AG04449 (cell line): ENCODE measurements at regions of chr4 and their contacts with region 1.

Region 1: GRCh38 chr4:52659001-52659721 is at the start of gene USP46:
- DNase-seq: no peak
- H3K4me3 ChIP-seq: peak within 1 kb of the TSS; percentile 76
- CTCF ChIP-seq: no peak

Region 2: DNA sequence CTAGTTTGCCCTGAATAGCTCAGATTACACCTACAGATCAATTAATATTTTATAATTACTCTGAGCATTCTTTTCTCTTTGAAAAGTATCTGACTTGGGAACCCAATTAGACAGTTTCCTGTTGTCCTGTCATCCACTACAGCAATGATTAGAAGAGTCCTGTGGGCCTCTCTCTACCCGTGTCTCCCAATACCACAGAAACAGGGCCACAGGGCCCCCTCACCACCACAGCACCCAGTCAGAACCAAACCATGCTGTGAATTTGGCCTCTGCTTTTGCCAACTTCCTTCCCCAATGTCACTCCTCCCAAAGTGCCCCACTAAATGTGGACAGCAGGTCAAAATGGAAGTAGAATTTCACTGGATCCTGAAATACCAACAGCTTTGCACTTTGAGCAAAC is 10.3 kb before region 1 on chr4:
- CTCF ChIA-PET with region 1: interaction called, 15 read pairs
- POLR2A ChIA-PET with region 1: interaction called, 7 read pairs
- DNase-seq: no peak
- H3K4me3 ChIP-seq: no peak overlapping the region
- CTCF ChIP-seq: no peak

Region 3: GRCh38 chr4:52701207-52701606 is 42.0 kb after region 1 on chr4:
- CTCF ChIA-PET with region 1: no interaction called
- POLR2A ChIA-PET with region 1: no interaction called
- DNase-seq: no peak
- H3K4me3 ChIP-seq: no peak overlapping the region
- CTCF ChIP-seq: no peak

Region 4: GRCh38 chr4:52712172-52712990 is 53.2 kb after region 1 on chr4:
- CTCF ChIA-PET with region 1: no interaction called
- POLR2A ChIA-PET with region 1: interaction called, 14 read pairs
- DNase-seq: peak; percentile 52
- H3K4me3 ChIP-seq: peak overlapping the region; percentile 86
- CTCF ChIP-seq: no peak